CD4-positive, alpha-beta memory T cell (primary cell): ENCODE measurements at regions of chr2 and their contacts with region 1.

Region 1: DNA sequence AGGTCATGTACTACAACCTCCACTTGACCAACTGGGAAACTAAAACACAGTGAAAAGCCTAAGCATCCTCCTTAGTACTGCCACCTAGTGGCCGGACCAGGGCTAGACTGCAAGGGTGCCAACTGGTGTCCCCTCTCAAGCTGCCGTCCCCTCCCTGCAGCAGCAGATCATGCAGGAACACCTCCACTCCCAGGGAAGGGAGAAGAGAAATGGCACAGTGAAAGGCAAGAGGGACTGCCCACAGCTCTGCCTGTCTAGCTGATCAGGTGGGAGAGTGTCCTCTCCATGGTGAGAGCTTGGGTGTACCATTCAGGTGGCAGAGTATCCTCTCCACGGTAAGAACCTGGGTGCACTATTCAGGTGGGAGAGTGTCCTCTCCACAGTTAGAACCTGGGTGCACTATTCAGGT is 78.1 kb downstream of the AAK1 start:
- DNase-seq: peak; percentile 36 to 67 (median 48)
- H3K4me3 ChIP-seq: no peak overlapping the region
- H3K4me3 Mint-ChIP-seq: peak overlapping the region; percentile 52 to 79 (median 70)
- H3K27ac ChIP-seq: peak overlapping the region; percentile 11
- H3K27ac Mint-ChIP-seq: peak overlapping the region; percentile 57 to 90 (median 80)
- H3K4me1 ChIP-seq: peaks cover 96% of the 10 kb centered on the region
- H3K4me1 Mint-ChIP-seq: peaks cover 70 to 99% (median 84%) of the 10 kb centered on the region in 4 donors
- H3K27me3 ChIP-seq: no peaks in the 10 kb centered on the region
- H3K27me3 Mint-ChIP-seq: no peaks in the 10 kb centered on the region

Region 2: DNA sequence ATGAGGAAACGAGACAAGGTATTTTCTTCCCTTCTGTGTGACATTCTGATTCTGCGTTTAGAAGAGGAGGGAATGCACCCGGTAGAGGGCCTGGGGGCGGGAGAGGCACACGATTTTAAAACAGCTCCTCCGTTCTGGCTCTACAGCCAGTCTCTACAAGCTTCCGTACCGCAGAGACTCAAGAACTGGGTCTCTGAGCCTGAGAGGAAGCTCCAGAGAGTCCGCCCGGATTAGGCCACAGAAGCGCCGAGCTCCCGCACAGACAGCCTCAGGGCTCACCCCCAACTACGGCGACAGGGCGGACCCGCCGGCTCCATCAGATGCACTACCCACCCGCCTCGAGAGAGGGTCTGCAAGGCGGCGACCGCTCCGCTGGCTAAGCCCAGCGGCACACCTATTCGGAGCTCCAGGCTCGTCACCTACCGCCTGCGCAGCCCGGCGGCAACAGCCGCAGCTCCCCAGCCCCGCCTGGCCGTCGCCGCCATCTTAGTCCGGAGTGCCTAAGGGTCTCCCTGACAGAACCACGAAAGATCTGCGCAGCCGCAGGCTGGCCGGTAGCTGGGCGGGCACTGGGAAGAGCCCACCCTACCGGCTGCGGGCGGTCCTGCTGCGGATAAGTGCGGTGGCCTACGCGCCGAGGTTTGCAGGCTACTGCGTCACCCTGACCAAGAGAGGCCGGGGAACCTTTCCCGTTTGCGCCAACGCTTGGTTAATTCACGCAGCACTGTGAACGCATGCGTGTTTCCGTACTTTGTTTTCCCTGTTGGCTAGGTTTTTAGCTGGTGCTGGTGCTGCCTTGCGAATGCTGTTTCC is 128.3 kb before region 1 on chr2 and contains the start of gene NFU1:
- CTCF ChIA-PET with region 1: interaction called, 10 read pairs
- POLR2A ChIA-PET with region 1: interaction called, 6 read pairs
- intact Hi-C with region 1: no loop called
- DNase-seq: peak; percentile 85 to 91 (median 89)
- H3K4me3 ChIP-seq: peak within 1 kb of the TSS; percentile 75 to 82
- H3K4me3 Mint-ChIP-seq: peak within 1 kb of the TSS; percentile 93 to 99 (median 98)
- H3K27ac ChIP-seq: peak within 1 kb of the TSS; percentile 91
- H3K27ac Mint-ChIP-seq: peak within 1 kb of the TSS; percentile 98 to 100 (median 99)
- H3K4me1 ChIP-seq: peaks cover 32% of the 10 kb centered on the region
- H3K4me1 Mint-ChIP-seq: peaks cover 26 to 48% (median 34%) of the 10 kb centered on the region in 4 donors
- H3K27me3 ChIP-seq: no peaks in the 10 kb centered on the region
- H3K27me3 Mint-ChIP-seq: no peaks in the 10 kb centered on the region
- total RNA-seq, gene NFU1: 23.9 to 27.0 TPM

Region 3: DNA sequence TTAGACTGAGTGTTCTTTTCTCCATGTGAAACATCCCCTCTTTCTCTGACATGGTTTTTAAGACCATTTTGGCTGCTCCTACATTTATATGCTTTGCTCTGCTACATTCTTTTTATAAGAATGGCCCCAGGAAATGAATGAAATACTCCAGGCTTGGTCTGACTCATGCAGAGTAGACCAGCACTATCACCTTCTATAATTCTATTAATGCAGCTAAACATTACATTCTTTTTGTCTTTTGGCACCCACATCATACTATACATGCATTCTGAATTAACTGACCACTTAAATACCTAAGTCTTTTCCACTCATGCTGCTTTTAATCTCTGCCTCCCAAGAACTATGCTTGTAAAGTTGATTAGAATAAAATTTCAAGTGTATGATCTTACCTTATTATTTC is 16.0 kb before region 1 on chr2:
- CTCF ChIA-PET with region 1: interaction called, 56 read pairs
- POLR2A ChIA-PET with region 1: interaction called, 3 read pairs
- intact Hi-C with region 1: no loop called
- DNase-seq: no peak
- H3K4me3 ChIP-seq: no peak overlapping the region
- H3K4me3 Mint-ChIP-seq: no peak overlapping the region
- H3K27ac ChIP-seq: no peak overlapping the region
- H3K27ac Mint-ChIP-seq: peak overlapping the region in 3 of 7 donors; percentile 10 to 86 (median 57)
- H3K4me1 ChIP-seq: peaks cover 11% of the 10 kb centered on the region
- H3K4me1 Mint-ChIP-seq: peaks cover 40 to 80% (median 58%) of the 10 kb centered on the region in 4 donors
- H3K27me3 ChIP-seq: no peaks in the 10 kb centered on the region
- H3K27me3 Mint-ChIP-seq: no peaks in the 10 kb centered on the region

Region 4: DNA sequence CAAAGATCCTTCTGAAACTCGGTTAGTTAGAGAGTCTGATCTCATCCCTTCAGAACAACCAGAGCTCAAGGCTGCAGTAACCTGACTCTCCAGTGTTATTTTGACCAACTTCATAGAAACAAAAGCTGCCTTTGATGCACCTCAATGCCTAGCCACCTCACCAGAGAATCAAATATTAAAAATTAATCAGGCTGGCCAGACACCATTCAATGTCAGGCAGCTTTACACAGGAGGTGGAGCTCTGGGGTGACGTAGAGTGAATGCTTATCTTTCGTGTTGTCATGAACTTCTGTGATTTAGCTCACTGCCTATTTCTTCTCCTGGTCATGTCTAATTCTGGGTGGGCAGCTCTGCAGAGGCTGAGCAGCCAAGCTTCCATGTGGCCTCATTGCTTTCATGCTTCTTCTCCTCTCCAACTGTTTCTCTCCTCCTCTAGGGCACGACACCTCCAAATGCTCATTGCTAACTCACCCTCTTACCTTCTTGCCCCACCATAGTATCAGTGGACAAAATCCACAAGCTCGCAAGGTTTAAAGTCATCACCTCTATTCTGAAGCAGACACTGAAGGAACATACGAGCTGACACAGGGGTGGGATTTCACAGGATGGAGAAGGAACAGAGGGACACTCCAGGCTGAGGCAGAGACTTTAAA is 38.7 kb after region 1 on chr2:
- CTCF ChIA-PET with region 1: interaction called, 17 read pairs
- POLR2A ChIA-PET with region 1: interaction called, 3 read pairs
- intact Hi-C with region 1: no loop called
- DNase-seq: no peak
- H3K4me3 ChIP-seq: no peak overlapping the region
- H3K4me3 Mint-ChIP-seq: peak overlapping the region in 6 of 8 donors; percentile 6 to 53 (median 28)
- H3K27ac ChIP-seq: no peak overlapping the region
- H3K27ac Mint-ChIP-seq: peak overlapping the region in 6 of 7 donors; percentile 18 to 85 (median 64)
- H3K4me1 ChIP-seq: peaks cover 94% of the 10 kb centered on the region
- H3K4me1 Mint-ChIP-seq: peaks cover 75 to 95% (median 87%) of the 10 kb centered on the region in 4 donors
- H3K27me3 ChIP-seq: no peaks in the 10 kb centered on the region
- H3K27me3 Mint-ChIP-seq: no peaks in the 10 kb centered on the region

Region 5: GRCh38 chr2:69634196-69634821 is 68.9 kb after region 1 on chr2:
- CTCF ChIA-PET with region 1: interaction called, 79 read pairs
- POLR2A ChIA-PET with region 1: interaction called, 6 read pairs
- intact Hi-C with region 1: no loop called
- DNase-seq: no peak
- H3K4me3 ChIP-seq: no peak overlapping the region
- H3K4me3 Mint-ChIP-seq: peak overlapping the region in 4 of 8 donors; percentile 18 to 52 (median 30)
- H3K27ac ChIP-seq: no peak overlapping the region
- H3K27ac Mint-ChIP-seq: peak overlapping the region in 5 of 7 donors; percentile 9 to 75 (median 38)
- H3K4me1 ChIP-seq: peaks cover 92% of the 10 kb centered on the region
- H3K4me1 Mint-ChIP-seq: peaks cover 56 to 63% (median 58%) of the 10 kb centered on the region in 4 donors
- H3K27me3 ChIP-seq: no peaks in the 10 kb centered on the region
- H3K27me3 Mint-ChIP-seq: no peaks in the 10 kb centered on the region

Region 6: DNA sequence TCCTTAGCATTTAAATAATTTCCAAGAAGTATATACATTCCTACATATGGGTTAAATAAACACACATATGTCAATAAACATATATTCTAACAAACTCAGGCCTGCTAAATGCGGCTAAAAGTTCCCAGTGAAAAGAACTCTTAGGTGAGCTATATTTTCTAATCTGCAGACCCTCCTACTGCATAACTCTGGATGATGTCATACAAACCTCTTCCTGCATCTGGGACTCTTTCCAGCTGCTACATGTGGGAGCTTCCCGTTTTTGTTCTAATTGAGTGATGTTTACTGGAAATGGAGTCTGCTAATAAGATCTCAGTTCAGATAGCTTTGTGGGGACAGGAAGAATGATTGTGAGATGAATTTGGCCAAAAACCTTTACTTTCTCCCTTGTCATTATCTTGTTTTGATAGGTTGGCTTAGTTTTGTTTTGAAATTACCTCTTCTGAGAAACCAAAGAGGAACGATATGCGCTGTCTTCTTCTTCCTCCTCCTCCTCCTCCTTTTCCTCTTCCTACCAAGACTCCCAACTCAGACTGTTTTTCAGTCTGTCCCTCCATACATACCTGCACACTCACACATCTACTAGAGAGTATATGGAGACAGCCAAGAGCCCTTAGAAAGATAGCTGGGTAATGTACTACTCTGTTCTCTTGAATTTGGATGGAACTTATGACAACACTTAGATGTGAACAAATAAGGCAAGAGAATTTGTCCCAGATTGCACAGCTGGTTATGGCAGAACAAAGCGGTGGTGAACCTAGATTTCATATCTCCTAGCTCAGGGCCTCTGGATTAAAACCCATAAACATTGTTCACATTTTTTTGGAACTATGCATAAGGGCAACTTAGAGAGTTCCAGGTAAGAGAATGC is 117.9 kb after region 1 on chr2:
- CTCF ChIA-PET with region 1: interaction called, 14 read pairs
- POLR2A ChIA-PET with region 1: no interaction called
- intact Hi-C with region 1: no loop called
- DNase-seq: no peak
- H3K4me3 ChIP-seq: no peak overlapping the region
- H3K4me3 Mint-ChIP-seq: peak overlapping the region; percentile 51 to 81 (median 70)
- H3K27ac ChIP-seq: no peak overlapping the region
- H3K27ac Mint-ChIP-seq: peak overlapping the region; percentile 17 to 94 (median 76)
- H3K4me1 ChIP-seq: peaks cover 38% of the 10 kb centered on the region
- H3K4me1 Mint-ChIP-seq: peaks cover 33 to 66% (median 52%) of the 10 kb centered on the region in 4 donors
- H3K27me3 ChIP-seq: no peaks in the 10 kb centered on the region
- H3K27me3 Mint-ChIP-seq: no peaks in the 10 kb centered on the region

Region 7: DNA sequence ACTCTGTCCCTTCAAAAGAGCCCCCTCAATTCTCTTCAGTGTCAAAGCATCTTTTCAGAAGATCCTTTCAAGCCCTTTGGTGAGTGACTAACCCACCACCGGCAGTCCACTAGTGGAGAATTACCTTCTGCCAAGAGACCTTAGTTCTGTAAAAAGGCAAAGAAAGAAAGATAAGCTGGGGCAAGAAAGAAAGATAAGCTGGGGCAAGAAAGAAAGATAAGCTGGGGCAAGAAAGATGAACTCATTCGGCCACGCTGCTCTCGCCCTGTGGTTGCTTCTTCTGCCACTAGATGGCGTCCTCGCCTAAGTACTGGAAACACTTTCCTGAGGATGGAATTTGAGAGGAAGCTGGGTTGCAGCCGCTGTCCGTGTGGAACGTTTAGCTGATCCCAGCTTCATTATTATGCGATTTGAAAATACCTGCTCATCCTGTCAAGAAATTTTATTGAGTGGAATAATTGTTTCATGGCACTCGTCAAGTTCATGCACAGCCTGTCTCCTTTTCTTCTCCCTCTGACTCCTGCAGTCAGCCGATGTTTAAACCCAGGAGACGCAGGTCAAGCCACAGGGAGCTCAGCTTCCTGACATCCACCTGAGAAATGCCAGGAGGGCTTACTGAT is 159.2 kb after region 1 on chr2:
- CTCF ChIA-PET with region 1: interaction called, 138 read pairs
- POLR2A ChIA-PET with region 1: interaction called, 3 read pairs
- intact Hi-C with region 1: no loop called
- DNase-seq: peak; percentile 74 to 80 (median 77)
- H3K4me3 ChIP-seq: no peak overlapping the region
- H3K4me3 Mint-ChIP-seq: peak overlapping the region in 7 of 8 donors; percentile 38 to 70 (median 60)
- H3K27ac ChIP-seq: no peak overlapping the region
- H3K27ac Mint-ChIP-seq: no peak overlapping the region
- H3K4me1 ChIP-seq: peaks cover 7% of the 10 kb centered on the region
- H3K4me1 Mint-ChIP-seq: peaks cover 4 to 7% (median 6%) of the 10 kb centered on the region in 4 donors
- H3K27me3 ChIP-seq: no peaks in the 10 kb centered on the region
- H3K27me3 Mint-ChIP-seq: no peaks in the 10 kb centered on the region